ENCODE measurements at regions of chr22 and their contacts with region 1.

Region 1: DNA sequence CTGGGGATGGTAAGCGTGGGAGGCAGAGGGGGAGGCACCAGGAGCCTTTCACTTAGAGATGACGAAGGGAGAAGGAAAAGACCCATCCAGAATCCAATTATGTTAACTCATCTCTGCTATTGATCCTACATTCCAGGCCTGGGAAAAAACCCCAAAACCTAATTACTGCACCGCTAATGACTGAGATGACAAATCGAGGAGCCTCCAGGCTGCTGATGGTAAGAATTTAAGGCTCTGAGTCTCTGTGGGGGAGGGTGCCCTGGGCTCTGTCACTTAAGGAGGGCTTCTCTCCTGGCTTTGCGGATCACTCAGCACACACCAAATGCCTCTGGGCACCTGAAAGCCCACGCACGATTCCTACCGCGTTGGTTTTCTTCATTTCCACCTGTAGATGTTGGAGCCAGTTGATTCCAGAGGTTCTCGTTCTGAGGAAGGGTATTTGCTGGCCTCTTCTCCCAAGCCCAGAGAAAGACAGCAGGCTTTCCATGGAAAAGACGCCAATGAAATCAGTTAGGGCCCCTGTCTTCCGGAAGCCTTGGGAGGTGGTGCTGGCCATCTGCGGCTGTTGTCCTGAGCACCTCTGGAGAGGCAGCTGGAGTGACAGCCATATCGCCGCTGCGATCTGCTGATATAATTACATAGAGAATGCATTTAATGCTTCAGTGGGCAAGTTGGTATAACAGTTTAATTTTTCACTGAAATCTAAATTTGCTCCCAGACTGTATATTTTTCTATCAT is 751.2 kb downstream of the BRD1 start:
- DNase-seq: no peak
- ATAC-seq: no peak
- H3K4me3 ChIP-seq: no peak overlapping the region
- H3K27ac ChIP-seq: no peak overlapping the region
- H3K4me1 ChIP-seq: no peaks in the 10 kb centered on the region
- H3K27me3 ChIP-seq: peaks cover 0 to 39% (median 13%) of the 10 kb centered on the region in 7 donors
- CTCF ChIP-seq: no peak

Region 2: GRCh38 chr22:49036513-49036912 is 40.0 kb before region 1 on chr22:
- intact Hi-C with region 1: no loop called
- DNase-seq: no peak
- ATAC-seq: no peak
- H3K4me3 ChIP-seq: no peak overlapping the region
- H3K27ac ChIP-seq: no peak overlapping the region
- H3K4me1 ChIP-seq: no peaks in the 10 kb centered on the region
- H3K27me3 ChIP-seq: peaks cover 0 to 48% (median 37%) of the 10 kb centered on the region in 7 donors
- CTCF ChIP-seq: no peak

Region 3: GRCh38 chr22:49289822-49290679 is 213.6 kb after region 1 on chr22:
- intact Hi-C with region 1: loop called in 1 of 10 experiments (anchors 10 kb)
- DNase-seq: no peak
- ATAC-seq: no peak
- H3K4me3 ChIP-seq: no peak overlapping the region
- H3K27ac ChIP-seq: no peak overlapping the region
- H3K4me1 ChIP-seq: no peaks in the 10 kb centered on the region
- H3K27me3 ChIP-seq: peaks cover 0 to 37% (median 23%) of the 10 kb centered on the region in 7 donors
- CTCF ChIP-seq: no peak

Measured in heart right ventricle (tissue), 16 donors.